Stomach (tissue), 19 donors: ENCODE measurements at regions of chr1 and their contacts with region 1.

Region 1: GRCh38 chr1:63435161-63435560 is 67.7 kb downstream of the ALG6 start:
- DNase-seq: peak in 1 of 2 donors; percentile 6
- H3K4me3 ChIP-seq: no peak overlapping the region
- H3K27ac ChIP-seq: no peak overlapping the region
- H3K4me1 ChIP-seq: no peaks in the 10 kb centered on the region
- H3K27me3 ChIP-seq: no peaks in the 10 kb centered on the region
- CTCF ChIP-seq: no peak
- EP300 ChIP-seq: no peak
- POLR2A ChIP-seq: no peak

Region 2: DNA sequence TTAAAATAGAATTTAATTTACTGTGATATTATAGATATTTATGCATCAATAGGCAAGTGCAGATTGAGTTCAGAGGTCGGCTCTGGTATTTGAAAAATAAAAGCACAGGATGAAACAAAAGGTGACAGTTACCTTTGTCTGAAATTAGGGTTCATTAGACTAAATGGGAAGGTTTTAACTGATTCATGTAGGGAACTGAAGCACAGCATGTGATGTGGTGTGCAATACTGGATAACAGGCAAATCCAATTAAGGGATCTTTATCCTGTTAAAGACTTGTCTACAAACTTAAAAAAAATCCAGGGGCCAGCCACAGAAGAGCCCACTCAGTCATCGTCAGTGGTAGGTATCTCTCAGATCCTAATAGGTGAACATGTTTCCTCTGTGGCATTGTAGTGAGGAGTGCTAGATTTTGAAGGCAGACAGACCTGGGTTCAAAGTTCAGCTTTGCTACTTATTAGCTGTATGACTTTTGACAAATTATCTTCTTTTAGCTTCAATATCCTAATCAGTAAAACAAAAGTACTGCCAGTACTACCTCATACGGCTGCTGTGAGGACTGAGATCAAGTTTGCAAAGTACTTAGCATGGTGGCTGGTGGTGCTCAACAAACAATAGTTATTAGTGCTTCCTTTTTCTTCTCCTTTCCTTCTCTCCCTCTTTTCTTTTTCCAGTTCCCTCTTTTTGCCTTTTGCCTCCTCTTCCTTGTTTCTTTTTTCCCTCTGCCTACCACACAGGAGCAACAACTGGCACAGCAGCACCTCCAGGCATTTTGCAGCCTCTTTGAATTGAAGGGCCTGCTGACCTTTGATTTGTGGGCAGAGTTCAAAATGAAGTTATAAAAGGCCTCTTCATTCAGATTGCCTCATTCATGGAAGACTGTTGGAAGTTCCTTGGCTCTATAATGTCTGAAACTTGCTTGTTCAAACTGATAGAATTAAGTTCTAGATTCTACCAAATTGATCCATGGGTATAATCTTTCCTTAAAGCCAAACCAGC is 157.7 kb before region 1 on chr1:
- intact Hi-C with region 1: no loop called
- DNase-seq: peak in 1 of 2 donors; percentile 11
- H3K4me3 ChIP-seq: no peak overlapping the region
- H3K27ac ChIP-seq: no peak overlapping the region
- H3K4me1 ChIP-seq: no peaks in the 10 kb centered on the region
- H3K27me3 ChIP-seq: no peaks in the 10 kb centered on the region
- CTCF ChIP-seq: no peak
- EP300 ChIP-seq: no peak
- POLR2A ChIP-seq: no peak

Region 3: DNA sequence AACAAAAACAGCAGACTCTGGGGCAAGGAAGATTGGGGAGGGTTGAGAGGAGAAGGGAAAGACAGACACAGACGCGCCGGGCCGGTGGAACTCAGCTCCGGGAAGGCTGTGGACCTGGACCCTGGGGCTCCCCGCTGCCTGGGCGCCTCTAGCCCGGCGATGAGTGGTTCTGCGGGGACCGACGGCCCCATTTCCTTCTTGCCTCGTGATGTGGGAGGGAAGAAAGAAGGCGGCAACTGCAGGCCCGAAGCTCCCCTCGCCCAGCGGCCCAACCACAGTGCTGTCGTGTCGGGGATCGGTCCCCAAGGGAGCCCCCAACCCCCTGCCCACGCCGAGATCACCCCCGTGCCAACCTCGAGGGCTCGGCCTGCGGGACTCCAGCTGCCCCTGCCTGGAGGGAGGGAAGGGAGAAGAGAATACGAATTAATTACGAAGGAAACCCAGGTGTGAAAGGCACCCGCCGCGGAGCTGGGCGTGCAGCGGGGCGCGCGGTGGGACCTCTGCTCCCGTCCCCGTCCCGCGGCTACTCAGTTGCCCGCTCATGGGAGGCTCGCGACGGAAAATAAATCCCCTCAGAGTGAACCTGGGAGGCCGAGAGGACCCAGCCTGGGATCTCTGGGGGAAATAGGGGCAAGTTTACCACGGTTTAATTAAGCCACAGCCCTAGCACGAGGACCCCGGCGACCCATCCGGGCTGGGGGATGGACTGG is 105.4 kb before region 1 on chr1:
- intact Hi-C with region 1: loop called (anchors 10 kb)
- DNase-seq: peak in 1 of 2 donors; percentile 32
- H3K4me3 ChIP-seq: peak overlapping the region in 2 of 4 donors; percentile 12 to 24
- H3K27ac ChIP-seq: peak overlapping the region in 1 of 5 donors; percentile 5
- H3K4me1 ChIP-seq: peaks cover 0 to 26% (median 15%) of the 10 kb centered on the region in 4 donors
- H3K27me3 ChIP-seq: peaks cover 31 to 100% (median 79%) of the 10 kb centered on the region in 3 donors
- CTCF ChIP-seq: no peak
- EP300 ChIP-seq: no peak
- POLR2A ChIP-seq: no peak